ENCODE measurements at regions of chr17 and their contacts with region 1.

Region 1: GRCh38 chr17:77429919-77430752 is 289.4 kb downstream of the SEC14L1 start:
- DNase-seq: peak; percentile 82
- ATAC-seq: peak; percentile 32
- H3K4me3 ChIP-seq: no peak overlapping the region
- H3K4me3 Mint-ChIP-seq: peak overlapping the region; percentile 61
- H3K27ac ChIP-seq: peak overlapping the region in 1 of 2 donors; percentile 43
- H3K27ac Mint-ChIP-seq: peak overlapping the region; percentile 81
- H3K4me1 ChIP-seq: peaks cover 100% of the 10 kb centered on the region in 2 donors
- H3K4me1 Mint-ChIP-seq: peaks cover 86% of the 10 kb centered on the region
- H3K27me3 ChIP-seq: no peaks in the 10 kb centered on the region
- H3K27me3 Mint-ChIP-seq: no peaks in the 10 kb centered on the region
- CTCF ChIP-seq: peak; percentile 87

Region 2: DNA sequence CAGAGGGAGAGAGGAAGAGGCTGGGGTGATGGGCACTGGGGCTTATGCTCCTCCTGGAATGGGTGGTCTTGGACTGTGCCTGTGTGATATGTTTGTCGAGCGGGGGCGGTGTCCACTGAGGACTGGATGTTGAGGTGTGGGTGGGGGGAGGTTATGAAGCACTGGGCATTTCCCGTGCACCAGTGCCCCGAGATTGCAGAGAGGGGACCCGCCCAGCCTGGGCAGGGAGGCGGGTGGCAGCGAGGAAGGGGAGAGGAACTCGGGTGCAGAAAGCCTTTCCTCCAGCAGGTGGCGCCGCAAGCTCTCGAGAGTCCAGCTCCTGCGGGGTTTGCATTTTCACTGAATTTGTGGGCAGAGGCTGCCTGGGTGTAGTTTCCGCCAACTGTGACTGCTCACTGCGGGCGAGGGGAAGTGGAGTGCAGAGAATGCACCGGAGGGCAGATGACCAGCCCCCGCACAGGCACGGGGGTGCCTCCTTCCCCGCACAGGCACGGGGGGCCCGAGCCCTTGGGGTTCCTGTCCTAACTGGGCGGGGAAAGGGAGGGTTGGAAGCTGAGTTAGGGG is 98.8 kb before region 1 on chr17:
- CTCF ChIA-PET with region 1: interaction called, 64 read pairs
- POLR2A ChIA-PET with region 1: interaction called, 7 read pairs
- intact Hi-C with region 1: loop called (anchors 2 kb)
- DNase-seq: peak; percentile 94
- ATAC-seq: peak; percentile 89
- H3K4me3 ChIP-seq: peak overlapping the region in 4 of 5 experiments; percentile 21 to 65 (median 36)
- H3K4me3 Mint-ChIP-seq: peak overlapping the region; percentile 82
- H3K27ac ChIP-seq: peak overlapping the region; percentile 67 to 77
- H3K27ac Mint-ChIP-seq: peak overlapping the region; percentile 85
- H3K4me1 ChIP-seq: peaks cover 41 to 66% of the 10 kb centered on the region in 2 donors
- H3K4me1 Mint-ChIP-seq: peaks cover 53% of the 10 kb centered on the region
- H3K27me3 ChIP-seq: no peaks in the 10 kb centered on the region
- H3K27me3 Mint-ChIP-seq: no peaks in the 10 kb centered on the region
- CTCF ChIP-seq: peak; percentile 93

Region 3: GRCh38 chr17:77444984-77445759 is 15.0 kb after region 1 on chr17:
- CTCF ChIA-PET with region 1: interaction called, 117 read pairs
- POLR2A ChIA-PET with region 1: interaction called, 147 read pairs
- intact Hi-C with region 1: loop called (anchors 1 kb)
- DNase-seq: peak; percentile 95
- ATAC-seq: peak; percentile 50
- H3K4me3 ChIP-seq: peak overlapping the region in 4 of 5 experiments; percentile 32 to 54 (median 49)
- H3K4me3 Mint-ChIP-seq: peak overlapping the region; percentile 79
- H3K27ac ChIP-seq: peak overlapping the region; percentile 96 to 100
- H3K27ac Mint-ChIP-seq: peak overlapping the region; percentile 98
- H3K4me1 ChIP-seq: peaks cover 89 to 100% of the 10 kb centered on the region in 2 donors
- H3K4me1 Mint-ChIP-seq: peaks cover 87% of the 10 kb centered on the region
- H3K27me3 ChIP-seq: no peaks in the 10 kb centered on the region
- H3K27me3 Mint-ChIP-seq: no peaks in the 10 kb centered on the region
- CTCF ChIP-seq: no peak

Region 4: DNA sequence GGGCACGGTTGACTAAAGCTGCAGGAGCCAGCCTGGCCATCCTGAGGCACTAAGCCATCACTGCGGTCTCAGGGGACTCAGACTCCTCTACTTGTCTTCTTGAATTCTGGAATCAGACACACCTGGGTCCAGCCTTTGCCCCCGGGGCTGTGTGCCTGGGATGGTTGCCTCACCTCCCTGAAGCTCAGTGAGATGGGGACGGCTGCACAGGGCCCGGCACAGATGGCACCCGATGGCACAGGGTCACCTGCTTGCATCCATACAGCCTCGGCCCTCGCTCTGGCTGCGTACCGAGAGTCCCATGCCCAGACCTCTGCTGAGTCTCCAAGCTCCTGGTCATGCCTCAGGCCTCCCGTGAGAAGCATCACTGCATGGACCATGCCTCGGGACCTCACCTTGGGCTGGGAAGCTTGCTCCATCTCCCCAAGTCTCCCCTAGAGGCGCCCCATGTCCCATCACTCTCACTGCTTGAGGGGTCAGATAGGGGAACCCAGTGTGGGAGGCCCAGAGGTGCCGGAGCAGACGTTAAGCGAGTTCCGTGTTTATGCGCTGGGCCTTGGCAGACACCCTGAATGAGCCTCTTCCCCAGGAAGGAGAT is 26.9 kb after region 1 on chr17:
- CTCF ChIA-PET with region 1: interaction called, 65 read pairs
- POLR2A ChIA-PET with region 1: interaction called, 147 read pairs
- intact Hi-C with region 1: no loop called
- DNase-seq: peak; percentile 71
- ATAC-seq: no peak
- H3K4me3 ChIP-seq: peak overlapping the region in 3 of 5 experiments; percentile 15 to 41 (median 35)
- H3K4me3 Mint-ChIP-seq: peak overlapping the region; percentile 94
- H3K27ac ChIP-seq: peak overlapping the region; percentile 77 to 96
- H3K27ac Mint-ChIP-seq: peak overlapping the region; percentile 100
- H3K4me1 ChIP-seq: peaks cover 91 to 98% of the 10 kb centered on the region in 2 donors
- H3K4me1 Mint-ChIP-seq: peaks cover 92% of the 10 kb centered on the region
- H3K27me3 ChIP-seq: no peaks in the 10 kb centered on the region
- H3K27me3 Mint-ChIP-seq: no peaks in the 10 kb centered on the region
- CTCF ChIP-seq: no peak

Region 5: GRCh38 chr17:77471984-77472461 is 41.9 kb after region 1 on chr17:
- CTCF ChIA-PET with region 1: interaction called, 25 read pairs
- POLR2A ChIA-PET with region 1: interaction called, 8 read pairs
- intact Hi-C with region 1: no loop called
- DNase-seq: no peak
- ATAC-seq: no peak
- H3K4me3 ChIP-seq: peak overlapping the region in 4 of 5 experiments; percentile 2 to 51 (median 19)
- H3K4me3 Mint-ChIP-seq: peak overlapping the region; percentile 73
- H3K27ac ChIP-seq: peak overlapping the region; percentile 49 to 89
- H3K27ac Mint-ChIP-seq: peak overlapping the region; percentile 75
- H3K4me1 ChIP-seq: peaks cover 89 to 97% of the 10 kb centered on the region in 2 donors
- H3K4me1 Mint-ChIP-seq: peaks cover 93% of the 10 kb centered on the region
- H3K27me3 ChIP-seq: no peaks in the 10 kb centered on the region
- H3K27me3 Mint-ChIP-seq: no peaks in the 10 kb centered on the region
- CTCF ChIP-seq: no peak

Region 6: DNA sequence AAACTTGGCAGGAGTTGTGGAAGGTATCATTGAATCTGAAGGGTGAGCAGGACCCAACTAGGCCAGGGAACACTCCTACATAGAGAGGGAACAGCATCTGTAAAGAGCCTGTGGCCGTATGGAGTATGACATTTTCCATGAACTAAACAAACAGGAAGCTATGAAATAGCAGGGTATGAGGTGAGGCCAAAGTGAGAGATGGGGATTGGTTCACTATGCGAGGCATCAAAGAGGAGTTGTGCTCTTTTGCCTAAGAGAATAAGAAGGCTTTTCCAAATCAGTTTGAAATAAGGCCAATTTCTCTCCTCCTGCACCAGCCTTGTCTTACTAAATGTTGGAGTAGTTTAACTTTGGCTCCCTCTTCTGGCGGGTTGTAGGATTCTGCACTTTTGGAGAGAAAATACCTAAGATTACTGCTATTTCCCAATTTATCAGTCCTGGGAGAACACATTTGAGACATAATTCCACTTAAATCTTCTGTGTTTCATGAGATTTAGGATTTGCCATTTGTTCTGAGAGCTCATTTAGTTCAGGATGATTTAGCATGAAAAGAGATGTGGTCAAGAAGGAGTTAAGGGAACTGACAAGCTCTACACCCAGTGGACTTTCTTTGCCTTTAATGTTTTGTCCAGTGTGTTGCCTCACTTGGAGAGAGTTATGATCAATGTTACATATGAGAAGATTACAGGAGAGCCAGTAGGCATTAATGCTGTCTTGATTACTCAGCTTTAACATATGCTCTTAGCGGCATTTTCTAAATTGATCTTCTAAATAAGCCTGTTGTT is 583.7 kb after region 1 on chr17:
- CTCF ChIA-PET with region 1: interaction called, 15 read pairs
- POLR2A ChIA-PET with region 1: no interaction called
- intact Hi-C with region 1: no loop called
- DNase-seq: peak; percentile 80
- ATAC-seq: peak; percentile 56
- H3K4me3 ChIP-seq: no peak overlapping the region
- H3K4me3 Mint-ChIP-seq: no peak overlapping the region
- H3K27ac ChIP-seq: no peak overlapping the region
- H3K27ac Mint-ChIP-seq: no peak overlapping the region
- H3K4me1 ChIP-seq: no peaks in the 10 kb centered on the region
- H3K4me1 Mint-ChIP-seq: peaks cover 7% of the 10 kb centered on the region
- H3K27me3 ChIP-seq: no peaks in the 10 kb centered on the region
- H3K27me3 Mint-ChIP-seq: no peaks in the 10 kb centered on the region
- CTCF ChIP-seq: peak; percentile 91